HEK293T (cell line): ENCODE measurements at regions of chr17 and their contacts with region 1.

Region 1: GRCh38 chr17:58587702-58588254 is 73.3 kb upstream of the MTMR4 start:
- DNase-seq: peak; percentile 83

Region 2: DNA sequence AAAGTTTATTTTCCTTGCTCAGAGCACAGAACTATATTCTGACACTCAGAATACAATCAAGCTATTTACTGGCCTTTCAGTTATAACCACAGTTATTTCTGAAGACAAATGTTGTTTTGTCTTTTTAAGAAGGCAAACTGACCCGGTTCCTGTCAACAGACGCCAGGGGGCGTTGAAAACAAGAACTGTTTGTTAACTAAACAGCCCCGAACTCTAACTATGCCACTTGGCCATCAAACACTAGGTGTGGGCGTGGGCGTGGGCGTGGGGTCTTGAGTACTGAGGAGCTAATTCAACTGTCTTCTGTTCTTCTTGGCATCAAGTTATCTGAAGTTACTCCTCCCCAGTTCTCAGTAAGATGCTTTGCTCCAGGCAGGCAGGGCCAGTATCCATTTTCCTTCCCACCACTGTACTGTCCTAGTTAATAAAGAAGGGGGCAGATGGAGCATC is 10.1 kb before region 1 on chr17:
- CTCF ChIA-PET with region 1: interaction called, 10 read pairs
- POLR2A ChIA-PET with region 1: no interaction called
- DNase-seq: peak; percentile 65